ENCODE measurements at regions of chr11 and their contacts with region 1.

Region 1: GRCh38 chr11:43638717-43639116 is 41.8 kb upstream of the HSD17B12 start:
- DNase-seq: no peak
- ATAC-seq: no peak
- H3K4me3 ChIP-seq: no peak overlapping the region
- H3K27ac ChIP-seq: no peak overlapping the region
- H3K4me1 ChIP-seq: no peaks in the 10 kb centered on the region
- H3K27me3 ChIP-seq: peaks cover 17% of the 10 kb centered on the region
- CTCF ChIP-seq: no peak
- POLR2A ChIP-seq: no peak
- RAD21 ChIP-seq: no peak

Region 2: DNA sequence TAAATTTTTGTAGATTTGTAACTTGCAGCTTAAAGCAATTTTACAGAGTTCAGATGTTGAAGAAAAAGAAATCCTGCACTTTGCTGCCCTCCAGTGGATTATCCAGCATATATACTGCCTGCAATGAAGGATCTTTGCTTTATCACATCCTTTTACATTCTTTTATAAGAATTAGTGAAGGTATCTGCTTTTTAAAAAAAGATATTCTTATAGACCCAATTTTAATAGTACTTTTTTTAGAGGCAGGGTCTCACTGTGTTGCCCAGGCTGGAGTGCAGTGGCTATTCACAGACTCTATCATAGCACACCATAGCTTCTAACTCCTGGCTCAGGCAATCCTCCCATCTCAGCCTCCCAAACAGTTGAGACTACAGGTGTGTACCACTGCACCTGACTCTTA is 219.3 kb before region 1 on chr11:
- CTCF ChIA-PET with region 1: no interaction called
- POLR2A ChIA-PET with region 1: no interaction called
- dilution Hi-C with region 1: no loop called
- in situ Hi-C with region 1: no loop called
- intact Hi-C with region 1: no loop called
- DNase-seq: peak; percentile 53
- ATAC-seq: peak; percentile 83
- H3K4me3 ChIP-seq: no peak overlapping the region
- H3K27ac ChIP-seq: no peak overlapping the region
- H3K4me1 ChIP-seq: 0 out of 2 replicates have a peak, but pooled peaks cover 2% of the 10 kb centered on the region
- H3K27me3 ChIP-seq: no peaks in the 10 kb centered on the region
- CTCF ChIP-seq: peak; percentile 59
- POLR2A ChIP-seq: no peak
- RAD21 ChIP-seq: peak; percentile 66

Region 3: GRCh38 chr11:43601511-43601910 is 37.2 kb before region 1 on chr11:
- CTCF ChIA-PET with region 1: no interaction called
- POLR2A ChIA-PET with region 1: no interaction called
- dilution Hi-C with region 1: no loop called
- in situ Hi-C with region 1: no loop called
- intact Hi-C with region 1: loop called (anchors 5 kb)
- DNase-seq: no peak
- ATAC-seq: no peak
- H3K4me3 ChIP-seq: no peak overlapping the region
- H3K27ac ChIP-seq: no peak overlapping the region
- H3K4me1 ChIP-seq: no peaks in the 10 kb centered on the region
- H3K27me3 ChIP-seq: peaks cover 2% of the 10 kb centered on the region; the same call in 1 of the 2 replicates
- CTCF ChIP-seq: no peak
- POLR2A ChIP-seq: no peak
- RAD21 ChIP-seq: no peak

Measured in IMR-90 (cell line).